ENCODE measurements at regions of chr5 and their contacts with region 1.

Region 1: GRCh38 chr5:157888814-157889532 is 30.0 kb upstream of the CLINT1 start:
- DNase-seq: peak; percentile 39
- H3K4me3 Mint-ChIP-seq: peak overlapping the region; percentile 47
- H3K27ac Mint-ChIP-seq: peak overlapping the region; percentile 79
- H3K4me1 Mint-ChIP-seq: peaks cover 49% of the 10 kb centered on the region
- H3K27me3 Mint-ChIP-seq: no peaks in the 10 kb centered on the region
- CTCF ChIP-seq: no peak

Region 2: DNA sequence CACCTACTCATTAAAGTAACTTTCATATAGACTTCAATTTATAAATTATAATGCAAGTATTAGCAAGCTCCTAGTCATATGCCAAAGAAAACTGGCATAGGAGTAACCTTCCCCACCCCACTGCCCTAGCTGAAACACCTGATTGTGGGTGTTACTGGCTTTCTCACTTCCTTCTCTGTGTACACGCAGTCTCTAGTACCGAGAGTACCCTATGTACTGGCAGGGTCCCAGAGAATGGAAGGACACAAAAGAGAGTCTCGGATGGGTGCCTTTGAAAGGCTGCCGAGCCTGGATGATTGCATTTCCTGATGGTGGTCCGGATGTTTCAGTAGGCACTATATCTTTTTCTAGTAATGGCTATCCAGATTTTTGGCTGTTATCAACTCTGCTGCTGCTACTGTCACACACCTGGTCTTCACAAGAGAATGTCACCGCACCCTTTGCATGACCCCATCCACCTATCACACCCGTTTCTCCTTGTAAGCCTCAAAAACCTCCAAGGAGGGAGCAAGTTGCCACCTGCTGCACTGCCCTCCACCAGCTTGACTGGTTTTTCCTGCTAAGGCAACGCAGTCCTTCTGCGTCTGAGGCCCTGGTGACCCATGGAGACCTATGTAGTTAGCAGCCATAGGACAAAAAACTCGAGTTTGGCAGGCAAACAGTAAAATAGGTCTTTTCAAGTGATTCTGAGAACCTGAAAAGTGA is 23.8 kb after region 1 on chr5:
- CTCF ChIA-PET with region 1: no interaction called
- intact Hi-C with region 1: loop called (anchors 1 kb)
- DNase-seq: peak; percentile 83
- H3K4me3 Mint-ChIP-seq: no peak overlapping the region
- H3K27ac Mint-ChIP-seq: peak overlapping the region; percentile 88
- H3K4me1 Mint-ChIP-seq: peaks cover 56% of the 10 kb centered on the region
- H3K27me3 Mint-ChIP-seq: no peaks in the 10 kb centered on the region
- CTCF ChIP-seq: no peak

Region 3: DNA sequence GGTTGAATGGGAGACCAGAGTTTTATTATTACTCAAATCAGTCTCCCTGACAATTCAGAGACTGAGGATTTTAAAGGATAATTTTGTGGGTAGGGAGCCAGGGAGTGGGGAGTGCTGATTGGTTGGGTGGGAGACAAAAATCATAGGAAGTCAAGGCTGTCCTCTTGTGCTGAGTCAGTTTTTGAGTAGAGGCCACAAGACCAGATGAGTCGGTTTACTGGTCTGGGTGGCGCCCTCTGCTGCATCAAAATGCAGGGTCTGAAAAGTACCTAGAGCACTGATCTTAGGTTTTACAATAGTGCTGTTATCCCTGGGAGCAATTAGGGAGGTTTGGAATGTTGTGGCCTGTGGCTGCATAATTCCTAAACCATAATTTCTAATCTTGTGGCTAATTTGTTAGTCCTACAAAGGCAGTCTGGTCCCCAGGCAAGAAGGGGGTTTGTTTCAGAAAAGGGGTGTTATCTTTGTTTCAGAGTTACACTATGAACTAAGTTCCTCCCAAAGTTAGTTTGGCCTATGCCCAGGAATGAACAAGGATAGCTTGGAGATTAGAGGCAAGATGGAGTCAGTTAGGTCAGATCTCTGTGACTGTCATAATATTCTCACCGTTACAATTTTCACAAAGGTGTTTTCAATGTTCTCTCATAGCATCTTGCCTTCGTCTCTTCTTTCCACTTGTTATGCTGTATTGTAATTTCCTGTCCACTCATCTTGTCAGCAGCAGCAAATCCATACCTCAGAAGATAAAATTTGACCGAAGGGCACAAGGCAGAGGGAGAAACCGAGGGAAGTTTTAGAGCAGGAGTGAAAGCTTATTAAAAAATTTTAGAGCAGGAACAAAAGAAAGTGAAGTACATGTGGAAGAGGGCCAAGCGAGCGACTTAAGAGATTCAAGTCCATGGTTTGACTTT is 29.2 kb after region 1 on chr5:
- CTCF ChIA-PET with region 1: interaction called, 3 read pairs
- intact Hi-C with region 1: loop called (anchors 1 kb)
- DNase-seq: peak; percentile 86
- H3K4me3 Mint-ChIP-seq: peak overlapping the region; percentile 60
- H3K27ac Mint-ChIP-seq: peak overlapping the region; percentile 92
- H3K4me1 Mint-ChIP-seq: peaks cover 70% of the 10 kb centered on the region
- H3K27me3 Mint-ChIP-seq: no peaks in the 10 kb centered on the region
- CTCF ChIP-seq: peak; percentile 61